Activated naive CD8-positive, alpha-beta T cell treated with anti-CD3 and anti-CD28 coated beads, Interleukin-2, amount 10 ng/mL, durations not matched to agents 7 days and 5 days (primary cell): ENCODE measurements at regions of chr13 and their contacts with region 1.

Region 1: DNA sequence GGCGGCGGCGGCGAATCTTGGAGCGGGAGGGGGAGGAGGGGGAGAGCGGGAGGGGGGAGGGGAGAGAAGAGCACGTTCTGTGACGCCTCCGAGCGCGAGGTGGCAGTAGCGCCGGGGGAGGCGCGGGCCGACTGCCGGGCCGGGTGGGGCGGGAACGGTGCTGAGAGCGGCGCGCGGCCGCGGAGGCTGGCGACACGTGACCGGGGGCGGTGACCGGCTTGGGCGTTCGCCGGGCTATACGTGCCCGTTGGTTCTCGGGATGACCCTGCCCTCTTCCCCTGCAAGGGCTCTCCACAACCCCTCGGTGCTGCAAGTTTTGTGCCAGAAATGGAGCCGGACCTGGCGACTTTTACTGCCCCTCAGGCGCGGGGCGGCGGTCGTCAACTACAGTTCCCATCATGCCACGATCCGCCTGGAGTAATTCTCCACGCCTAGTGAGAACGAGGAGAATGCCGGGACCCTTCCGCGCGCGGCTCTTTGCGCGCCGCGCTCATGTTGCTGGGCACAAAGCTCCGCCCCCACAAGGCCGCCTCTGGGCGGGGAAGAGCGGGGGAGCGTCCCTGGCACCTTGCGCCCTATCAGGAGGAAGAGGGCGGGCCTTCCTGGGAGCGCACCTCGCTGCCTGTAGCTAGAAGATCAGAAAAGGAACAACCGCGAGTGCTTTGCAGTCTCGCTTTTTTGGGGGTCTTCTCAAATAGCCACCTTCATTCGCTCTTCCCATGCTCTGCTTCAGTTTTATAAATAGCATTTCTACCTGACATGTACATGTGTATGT is at the start of gene KPNA3:
- DNase-seq: peak; percentile 92
- ATAC-seq: peak; percentile 90
- H3K4me3 Mint-ChIP-seq: peak within 1 kb of the TSS; percentile 96
- H3K27ac Mint-ChIP-seq: peak within 1 kb of the TSS; percentile 94
- H3K4me1 Mint-ChIP-seq: peaks cover 24% of the 10 kb centered on the region
- H3K27me3 Mint-ChIP-seq: peaks cover 2% of the 10 kb centered on the region
- total RNA-seq, gene KPNA3: 27.8 to 28.1 TPM

Region 2: GRCh38 chr13:49690992-49691886 is 101.5 kb before region 1 on chr13 and contains the start of gene EBPL:
- POLR2A ChIA-PET with region 1: interaction called, 20 read pairs
- DNase-seq: peak; percentile 91
- ATAC-seq: peak; percentile 99
- H3K4me3 Mint-ChIP-seq: peak within 1 kb of the TSS; percentile 80
- H3K27ac Mint-ChIP-seq: peak within 1 kb of the TSS; percentile 77
- H3K4me1 Mint-ChIP-seq: peaks cover 21% of the 10 kb centered on the region
- H3K27me3 Mint-ChIP-seq: no peaks in the 10 kb centered on the region
- total RNA-seq, gene EBPL: 26.0 to 28.0 TPM

Region 3: GRCh38 chr13:49759503-49759902 is 33.2 kb before region 1 on chr13:
- POLR2A ChIA-PET with region 1: no interaction called
- DNase-seq: no peak
- ATAC-seq: no peak
- H3K4me3 Mint-ChIP-seq: no peak overlapping the region
- H3K27ac Mint-ChIP-seq: no peak overlapping the region
- H3K4me1 Mint-ChIP-seq: peaks cover 8% of the 10 kb centered on the region
- H3K27me3 Mint-ChIP-seq: no peaks in the 10 kb centered on the region